ENCODE measurements at regions of chr15 and their contacts with region 1.

Region 1: DNA sequence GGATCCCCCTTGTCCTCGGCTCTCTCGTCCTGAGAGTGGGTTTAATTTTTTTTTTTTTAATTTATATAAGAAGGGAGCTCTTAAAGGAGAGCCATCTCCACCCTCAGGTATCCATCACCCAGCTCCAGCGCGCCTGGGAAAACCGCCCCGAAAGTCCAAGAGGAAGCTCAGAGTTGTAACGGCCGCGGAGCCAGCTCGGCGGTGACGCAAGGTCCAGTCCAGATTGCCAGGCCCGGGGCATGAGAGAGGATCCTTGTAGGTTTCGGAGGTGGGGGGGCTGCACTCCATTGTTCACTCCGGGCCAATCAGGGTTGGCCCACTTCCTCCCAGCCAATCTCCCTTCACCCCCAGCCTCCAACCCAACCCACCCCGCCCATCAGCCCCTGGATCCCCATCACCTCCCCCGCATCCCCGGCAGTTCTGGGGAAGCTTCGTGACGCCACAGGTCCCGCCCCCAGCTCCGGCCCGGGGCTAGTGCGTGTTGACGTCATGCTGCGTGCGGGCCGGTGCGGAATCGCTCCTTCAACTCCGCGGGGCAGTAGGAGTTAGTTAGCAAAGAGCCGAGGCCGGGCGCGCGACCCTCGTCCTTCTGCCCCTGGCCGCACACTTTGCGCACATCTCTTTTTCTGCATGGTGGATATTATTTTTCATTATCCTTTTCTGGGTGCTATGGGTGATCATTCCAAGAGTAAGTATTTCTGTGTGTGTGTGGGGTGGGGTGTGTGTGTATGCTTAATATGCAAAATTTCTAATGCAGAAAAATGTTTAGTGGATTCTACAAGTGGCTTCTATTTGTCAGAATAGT is at the start of gene ISL2:
- DNase-seq: peak; percentile 92
- ATAC-seq: peak; percentile 90
- H3K4me3 ChIP-seq: peak within 1 kb of the TSS; percentile 75
- H3K27ac ChIP-seq: peak within 1 kb of the TSS; percentile 76
- H3K4me1 ChIP-seq: peaks cover 15% of the 10 kb centered on the region
- H3K27me3 ChIP-seq: no peaks in the 10 kb centered on the region
- CTCF ChIP-seq: no peak
- total RNA-seq, gene ISL2: 3.6 and 6.3 TPM in 2 replicates

Region 2: GRCh38 chr15:76196269-76197231 is 139.9 kb before region 1 on chr15:
- CTCF ChIA-PET with region 1: no interaction called
- POLR2A ChIA-PET with region 1: no interaction called
- intact Hi-C with region 1: loop called (anchors 5 kb)
- DNase-seq: peak; percentile 88
- ATAC-seq: peak; percentile 82
- H3K4me3 ChIP-seq: peak overlapping the region; percentile 20; the same call in 1 of the 2 replicates
- H3K27ac ChIP-seq: peak overlapping the region; percentile 71
- H3K4me1 ChIP-seq: peaks cover 26% of the 10 kb centered on the region
- H3K27me3 ChIP-seq: no peaks in the 10 kb centered on the region
- CTCF ChIP-seq: no peak

Region 3: GRCh38 chr15:76217029-76217428 is 119.4 kb before region 1 on chr15:
- CTCF ChIA-PET with region 1: no interaction called
- POLR2A ChIA-PET with region 1: no interaction called
- intact Hi-C with region 1: no loop called
- DNase-seq: peak; percentile 79
- ATAC-seq: peak; percentile 84
- H3K4me3 ChIP-seq: no peak overlapping the region; the same call in 1 of the 2 replicates
- H3K27ac ChIP-seq: 0 out of 2 replicates have a peak overlapping the region, but pooled peaks have one; percentile 9
- H3K4me1 ChIP-seq: peaks cover 24% of the 10 kb centered on the region
- H3K27me3 ChIP-seq: no peaks in the 10 kb centered on the region
- CTCF ChIP-seq: no peak

Region 4: GRCh38 chr15:76233921-76234320 is 102.5 kb before region 1 on chr15:
- CTCF ChIA-PET with region 1: no interaction called
- POLR2A ChIA-PET with region 1: no interaction called
- intact Hi-C with region 1: no loop called
- DNase-seq: no peak
- ATAC-seq: no peak
- H3K4me3 ChIP-seq: no peak overlapping the region
- H3K27ac ChIP-seq: no peak overlapping the region
- H3K4me1 ChIP-seq: no peaks in the 10 kb centered on the region
- H3K27me3 ChIP-seq: no peaks in the 10 kb centered on the region
- CTCF ChIP-seq: no peak

Region 5: GRCh38 chr15:76296849-76297248 is 39.6 kb before region 1 on chr15:
- CTCF ChIA-PET with region 1: no interaction called
- POLR2A ChIA-PET with region 1: interaction called, 15 read pairs
- intact Hi-C with region 1: no loop called
- DNase-seq: no peak
- ATAC-seq: no peak
- H3K4me3 ChIP-seq: no peak overlapping the region
- H3K27ac ChIP-seq: no peak overlapping the region
- H3K4me1 ChIP-seq: peaks cover 12% of the 10 kb centered on the region
- H3K27me3 ChIP-seq: no peaks in the 10 kb centered on the region
- CTCF ChIP-seq: no peak

Region 6: GRCh38 chr15:76312540-76313174 is 23.8 kb before region 1 on chr15:
- CTCF ChIA-PET with region 1: interaction called, 13 read pairs
- POLR2A ChIA-PET with region 1: interaction called, 14 read pairs
- intact Hi-C with region 1: loop called (anchors 2 kb)
- DNase-seq: peak; percentile 97
- ATAC-seq: peak; percentile 81
- H3K4me3 ChIP-seq: peak overlapping the region; percentile 25; the same call in 1 of the 2 replicates
- H3K27ac ChIP-seq: peak overlapping the region; percentile 96
- H3K4me1 ChIP-seq: peaks cover 45% of the 10 kb centered on the region
- H3K27me3 ChIP-seq: no peaks in the 10 kb centered on the region
- CTCF ChIP-seq: no peak

Region 7: DNA sequence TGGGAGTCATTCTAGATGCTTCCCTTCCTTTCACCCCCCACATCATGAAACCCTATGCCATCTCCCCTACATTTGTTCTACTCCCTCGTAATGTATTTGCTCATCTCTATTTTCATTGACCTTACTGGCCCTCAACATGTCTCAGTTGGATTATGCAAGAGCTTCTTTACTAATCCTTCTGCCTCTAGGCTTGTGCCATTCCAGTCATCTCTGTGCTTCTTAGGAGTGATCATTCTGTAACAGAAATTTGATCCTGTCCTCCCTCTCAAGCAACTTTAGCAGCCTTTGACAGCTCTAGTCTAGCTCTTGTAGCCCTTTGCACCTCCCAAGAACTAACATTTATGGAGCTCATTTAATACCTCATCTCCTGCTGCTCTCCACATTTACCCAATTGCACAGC is 64.8 kb after region 1 on chr15:
- CTCF ChIA-PET with region 1: no interaction called
- POLR2A ChIA-PET with region 1: no interaction called
- intact Hi-C with region 1: no loop called
- DNase-seq: peak; percentile 47
- ATAC-seq: no peak
- H3K4me3 ChIP-seq: no peak overlapping the region
- H3K27ac ChIP-seq: no peak overlapping the region
- H3K4me1 ChIP-seq: peaks cover 6% of the 10 kb centered on the region
- H3K27me3 ChIP-seq: no peaks in the 10 kb centered on the region
- CTCF ChIP-seq: no peak

Region 8: GRCh38 chr15:76648732-76649444 is 312.4 kb after region 1 on chr15:
- CTCF ChIA-PET with region 1: no interaction called
- POLR2A ChIA-PET with region 1: interaction called, 16 read pairs
- intact Hi-C with region 1: no loop called
- DNase-seq: no peak
- ATAC-seq: no peak
- H3K4me3 ChIP-seq: no peak overlapping the region
- H3K27ac ChIP-seq: no peak overlapping the region
- H3K4me1 ChIP-seq: no peaks in the 10 kb centered on the region
- H3K27me3 ChIP-seq: no peaks in the 10 kb centered on the region
- CTCF ChIP-seq: no peak

Region 9: GRCh38 chr15:76840830-76841460 is 504.5 kb after region 1 on chr15:
- CTCF ChIA-PET with region 1: no interaction called
- POLR2A ChIA-PET with region 1: no interaction called
- intact Hi-C with region 1: loop called (anchors 2 kb)
- DNase-seq: peak; percentile 53
- ATAC-seq: peak; percentile 58; the same call in 1 of the 2 replicates
- H3K4me3 ChIP-seq: no peak overlapping the region
- H3K27ac ChIP-seq: no peak overlapping the region
- H3K4me1 ChIP-seq: no peaks in the 10 kb centered on the region
- H3K27me3 ChIP-seq: no peaks in the 10 kb centered on the region
- CTCF ChIP-seq: peak; percentile 79

Region 10: GRCh38 chr15:76866716-76867321 is 530.4 kb after region 1 on chr15:
- CTCF ChIA-PET with region 1: no interaction called
- POLR2A ChIA-PET with region 1: no interaction called
- intact Hi-C with region 1: loop called (anchors 10 kb)
- DNase-seq: peak; percentile 61
- ATAC-seq: 0 out of 2 replicates have a peak, but pooled peaks have one; percentile 24
- H3K4me3 ChIP-seq: no peak overlapping the region
- H3K27ac ChIP-seq: no peak overlapping the region
- H3K4me1 ChIP-seq: no peaks in the 10 kb centered on the region
- H3K27me3 ChIP-seq: no peaks in the 10 kb centered on the region
- CTCF ChIP-seq: peak; percentile 75

Measured in PC-3 (cell line).